Activated CD8-positive, alpha-beta T cell treated with anti-CD3 and anti-CD28 coated beads, Interleukin-2, amount 10 ng/mL, durations not matched to agents 7 days and 5 days (primary cell): ENCODE measurements at regions of chr10 and their contacts with region 1.

Region 1: DNA sequence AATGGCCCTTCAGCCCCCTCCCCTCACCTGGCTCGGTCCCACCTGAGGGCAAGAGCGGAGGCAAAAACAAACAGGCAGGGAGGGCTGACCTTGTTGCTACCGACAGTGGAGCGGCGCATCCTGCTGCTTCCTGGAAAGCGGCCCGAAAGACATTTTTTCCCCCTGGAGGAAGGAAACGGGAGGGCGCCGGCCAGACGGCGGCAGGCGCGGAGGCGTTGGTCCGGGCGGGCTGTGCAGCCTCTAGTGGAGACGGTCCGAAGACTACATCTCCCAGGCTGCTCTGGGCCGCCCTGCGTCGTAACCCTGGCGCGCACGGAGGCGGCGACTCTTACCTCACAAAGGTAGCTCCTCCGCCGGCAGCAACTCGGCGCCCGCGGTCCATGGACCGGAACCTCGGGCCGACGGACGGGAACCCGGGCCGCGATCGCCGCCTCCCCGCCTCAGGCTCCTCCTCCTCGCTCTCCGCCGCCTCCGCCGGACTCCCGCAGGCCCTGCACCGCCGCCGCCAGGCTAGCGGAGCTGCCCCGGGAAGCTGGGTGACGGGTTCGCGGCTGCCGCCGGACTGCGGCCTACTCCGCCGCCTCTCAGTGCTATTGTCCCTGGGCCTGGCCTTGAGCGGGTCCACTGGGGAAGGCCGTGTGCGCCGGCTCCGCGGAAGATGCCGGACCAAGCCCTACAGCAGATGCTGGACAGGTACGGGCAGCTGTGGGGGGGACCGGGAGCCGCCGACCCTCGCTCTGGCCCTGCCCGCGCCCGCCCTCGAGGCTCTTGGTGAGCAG is at the starts of genes CPEB3 and MARCHF5:
- DNase-seq: peak; percentile 95
- ATAC-seq: peak; percentile 99
- H3K4me3 Mint-ChIP-seq: peak within 1 kb of the TSS; percentile 94
- H3K27ac Mint-ChIP-seq: peak within 1 kb of the TSS; percentile 84
- H3K4me1 Mint-ChIP-seq: peaks cover 29% of the 10 kb centered on the region
- H3K27me3 Mint-ChIP-seq: no peaks in the 10 kb centered on the region
- total RNA-seq, gene CPEB3: 2.3 to 2.4 TPM
- total RNA-seq, gene MARCHF5: 21.3 to 24.3 TPM

Region 2: GRCh38 chr10:92087750-92088395 is 203.2 kb before region 1 on chr10:
- CTCF ChIA-PET with region 1: interaction called, 66 read pairs
- POLR2A ChIA-PET with region 1: interaction called, 5 read pairs
- DNase-seq: peak; percentile 70
- ATAC-seq: peak; percentile 98
- H3K4me3 Mint-ChIP-seq: no peak overlapping the region
- H3K27ac Mint-ChIP-seq: no peak overlapping the region
- H3K4me1 Mint-ChIP-seq: no peaks in the 10 kb centered on the region
- H3K27me3 Mint-ChIP-seq: no peaks in the 10 kb centered on the region

Region 3: DNA sequence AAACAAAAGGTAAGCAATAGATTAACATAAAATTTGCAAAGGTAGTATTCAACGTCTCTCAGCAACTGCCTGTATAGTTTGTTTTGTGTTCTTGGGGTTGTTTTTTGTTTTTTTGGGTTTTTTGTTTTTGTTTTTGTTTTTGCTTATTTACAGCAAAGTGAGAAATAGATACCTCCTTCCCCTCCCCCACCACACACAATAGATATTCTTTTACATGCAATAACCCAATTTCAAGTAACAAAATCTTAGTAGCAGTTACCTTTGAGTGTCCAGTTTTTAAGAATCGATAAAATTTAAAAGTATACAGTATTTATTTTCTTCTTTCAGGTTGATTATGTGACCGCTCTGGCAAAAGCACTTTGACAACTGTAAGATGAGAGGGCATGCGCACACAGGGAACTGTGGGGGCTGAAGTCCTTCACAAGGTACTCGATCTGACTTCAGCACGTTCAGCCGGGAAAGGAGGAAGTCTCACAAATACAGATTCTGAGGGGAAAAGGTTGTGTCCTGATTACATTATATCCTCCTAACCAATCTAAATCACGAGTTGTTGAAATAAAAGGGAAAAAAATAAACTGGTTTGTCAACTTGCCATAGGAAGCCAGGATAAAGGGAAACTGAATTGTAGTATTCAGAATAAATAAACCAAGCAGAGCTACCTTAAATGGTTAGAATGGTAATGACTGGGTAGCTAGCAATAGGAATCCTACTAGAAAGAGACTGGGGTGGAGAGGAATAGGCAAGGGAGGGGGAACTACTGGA is 47.9 kb before region 1 on chr10:
- CTCF ChIA-PET with region 1: interaction called, 11 read pairs
- POLR2A ChIA-PET with region 1: interaction called, 4 read pairs
- DNase-seq: peak; percentile 53
- ATAC-seq: peak; percentile 33
- H3K4me3 Mint-ChIP-seq: peak overlapping the region; percentile 40
- H3K27ac Mint-ChIP-seq: no peak overlapping the region
- H3K4me1 Mint-ChIP-seq: peaks cover 27% of the 10 kb centered on the region
- H3K27me3 Mint-ChIP-seq: peaks cover 4% of the 10 kb centered on the region

Region 4: GRCh38 chr10:92274071-92274470 is 17.0 kb before region 1 on chr10:
- CTCF ChIA-PET with region 1: interaction called, 17 read pairs
- POLR2A ChIA-PET with region 1: interaction called, 5 read pairs
- DNase-seq: no peak
- ATAC-seq: no peak
- H3K4me3 Mint-ChIP-seq: no peak overlapping the region
- H3K27ac Mint-ChIP-seq: no peak overlapping the region
- H3K4me1 Mint-ChIP-seq: no peaks in the 10 kb centered on the region
- H3K27me3 Mint-ChIP-seq: no peaks in the 10 kb centered on the region

Region 5: DNA sequence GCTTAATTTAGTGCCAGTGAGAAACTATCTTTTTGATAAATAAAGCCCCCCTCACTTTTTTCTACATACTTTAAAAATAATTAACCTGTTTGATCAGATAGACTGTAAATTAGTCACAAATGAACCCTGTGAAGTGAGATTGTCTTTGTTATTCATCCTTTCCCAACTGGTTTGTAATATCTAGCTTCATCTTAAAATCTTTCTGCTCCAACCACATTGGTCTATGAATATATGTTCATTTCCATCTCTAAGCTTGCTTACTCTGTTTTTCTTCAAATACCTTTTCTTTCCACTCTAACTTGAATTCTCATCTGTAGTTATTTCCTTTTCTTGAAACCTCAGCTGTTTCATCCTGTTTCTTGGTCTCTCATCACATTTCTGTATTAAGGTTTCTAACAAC is 12.1 kb after region 1 on chr10:
- CTCF ChIA-PET with region 1: interaction called, 20 read pairs
- POLR2A ChIA-PET with region 1: interaction called, 12 read pairs
- DNase-seq: no peak
- ATAC-seq: no peak
- H3K4me3 Mint-ChIP-seq: no peak overlapping the region
- H3K27ac Mint-ChIP-seq: no peak overlapping the region
- H3K4me1 Mint-ChIP-seq: peaks cover 13% of the 10 kb centered on the region
- H3K27me3 Mint-ChIP-seq: no peaks in the 10 kb centered on the region

Region 6: DNA sequence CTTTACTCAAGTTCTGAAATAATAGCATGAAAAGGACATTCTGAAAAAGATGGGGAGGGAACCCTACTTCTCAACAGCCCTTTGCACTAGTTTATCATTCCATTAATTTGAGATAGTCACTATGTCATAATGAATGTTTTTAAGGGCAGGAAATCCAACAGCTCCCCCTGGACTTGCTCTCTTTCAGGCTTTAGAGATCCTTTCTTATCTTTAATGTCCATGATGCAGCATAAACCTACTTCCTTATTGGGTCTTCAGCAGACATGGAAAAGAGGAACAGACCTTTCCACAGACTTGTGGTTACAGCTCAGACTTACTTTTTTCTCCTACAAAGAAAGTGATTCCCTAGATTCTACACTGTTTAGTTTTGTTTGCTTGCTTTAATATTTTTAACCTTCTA is 195.6 kb after region 1 on chr10:
- CTCF ChIA-PET with region 1: no interaction called
- POLR2A ChIA-PET with region 1: no interaction called
- DNase-seq: no peak
- ATAC-seq: no peak
- H3K4me3 Mint-ChIP-seq: no peak overlapping the region
- H3K27ac Mint-ChIP-seq: no peak overlapping the region
- H3K4me1 Mint-ChIP-seq: no peaks in the 10 kb centered on the region
- H3K27me3 Mint-ChIP-seq: no peaks in the 10 kb centered on the region

Region 7: GRCh38 chr10:92559046-92559445 is 268.0 kb after region 1 on chr10:
- CTCF ChIA-PET with region 1: no interaction called
- POLR2A ChIA-PET with region 1: no interaction called
- DNase-seq: no peak
- ATAC-seq: no peak
- H3K4me3 Mint-ChIP-seq: no peak overlapping the region
- H3K27ac Mint-ChIP-seq: no peak overlapping the region
- H3K4me1 Mint-ChIP-seq: no peaks in the 10 kb centered on the region
- H3K27me3 Mint-ChIP-seq: no peaks in the 10 kb centered on the region

Region 8: GRCh38 chr10:92592761-92593618 is 302.0 kb after region 1 on chr10 and contains the start of gene KIF11:
- CTCF ChIA-PET with region 1: interaction called, 5 read pairs
- POLR2A ChIA-PET with region 1: interaction called, 10 read pairs
- DNase-seq: peak; percentile 98
- ATAC-seq: peak; percentile 92
- H3K4me3 Mint-ChIP-seq: peak within 1 kb of the TSS; percentile 88
- H3K27ac Mint-ChIP-seq: peak within 1 kb of the TSS; percentile 97
- H3K4me1 Mint-ChIP-seq: peaks cover 53% of the 10 kb centered on the region
- H3K27me3 Mint-ChIP-seq: no peaks in the 10 kb centered on the region
- total RNA-seq, gene KIF11: 85.2 to 87.0 TPM